ENCODE measurements at regions of chr2 and their contacts with region 1.

Region 1: DNA sequence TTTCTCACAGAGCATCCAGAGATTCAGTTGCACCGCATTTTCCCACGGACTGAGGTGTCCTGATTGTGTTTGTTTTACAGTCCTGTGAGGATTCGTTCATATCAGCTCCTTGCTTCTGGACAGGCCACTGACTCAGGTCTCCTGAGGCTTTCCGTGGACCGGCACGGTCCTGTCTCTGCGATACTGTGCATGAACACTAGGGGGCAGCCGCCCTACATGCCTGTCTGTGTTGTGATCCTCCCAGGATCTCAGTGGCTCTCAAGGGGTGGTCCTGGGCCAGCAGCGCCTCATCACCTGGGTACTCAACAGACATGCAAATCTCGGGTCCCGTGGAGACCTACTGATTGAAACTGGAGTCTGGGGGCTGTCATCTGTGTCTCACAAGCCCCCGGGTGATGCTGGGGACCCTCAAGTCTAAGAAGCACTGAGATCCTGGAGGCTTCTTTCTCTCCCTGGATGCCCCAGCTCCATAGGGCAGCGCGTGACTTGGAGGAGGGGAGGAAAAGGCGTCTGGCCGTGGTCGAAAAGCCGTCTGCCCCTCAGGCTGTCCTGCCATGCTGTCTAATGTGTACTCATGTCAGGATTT is 28.9 kb downstream of the IL1R2 start:
- DNase-seq: peak; percentile 77 to 87
- ATAC-seq: peak; percentile 82 to 97
- H3K4me3 ChIP-seq: no peak overlapping the region
- H3K27ac ChIP-seq: no peak overlapping the region
- H3K4me1 ChIP-seq: peaks cover 3 to 19% of the 10 kb centered on the region in 2 donors
- H3K27me3 ChIP-seq: no peaks in the 10 kb centered on the region
- CTCF ChIP-seq: peak; percentile 97 to 100 (median 98)
- POLR2A ChIP-seq: no peak

Region 2: DNA sequence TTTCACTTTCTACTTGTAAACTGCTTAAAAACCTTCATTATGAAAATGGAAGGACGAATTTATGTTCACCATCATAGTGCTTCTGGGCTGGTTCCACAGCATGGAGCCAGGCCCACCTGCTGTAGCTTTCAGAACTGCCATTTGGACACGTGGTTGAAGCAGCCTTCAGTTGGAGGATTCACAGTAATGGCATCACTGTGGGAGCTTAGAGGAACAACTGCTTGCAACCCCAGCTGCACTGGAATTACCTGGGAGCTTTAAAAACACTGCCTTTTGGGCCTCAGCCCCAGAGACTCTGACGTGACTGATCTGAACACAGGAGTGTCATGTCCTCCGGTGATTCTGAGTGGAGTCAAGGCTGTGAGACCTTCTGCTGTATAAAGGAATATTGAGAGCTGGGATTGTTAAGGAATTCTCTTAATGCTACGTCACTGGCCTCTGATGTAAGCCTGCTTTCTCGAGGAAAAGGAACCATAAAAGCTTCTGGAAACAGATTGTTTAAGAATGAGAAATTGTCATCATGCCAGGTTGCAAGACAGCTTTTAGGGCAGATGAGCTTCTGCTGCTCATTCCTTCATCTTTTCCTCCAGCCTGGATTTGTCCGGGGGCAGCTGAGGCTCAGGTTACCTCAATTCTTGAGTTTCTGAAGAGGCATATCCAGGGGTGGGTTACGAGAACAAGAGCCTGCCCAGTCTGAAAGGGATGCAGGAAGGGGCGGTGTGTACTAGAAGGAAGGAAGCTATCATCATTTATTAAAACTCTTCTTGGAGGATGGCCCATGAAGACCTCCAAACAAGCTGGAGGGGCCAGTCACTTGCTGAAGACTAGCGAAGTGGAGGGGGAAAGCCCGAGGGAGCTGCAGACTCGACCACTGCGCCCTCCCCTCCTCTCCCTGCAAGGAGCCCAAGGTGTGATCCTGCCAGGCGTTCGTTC is 120.6 kb after region 1 on chr2:
- in situ Hi-C with region 1: no loop called
- intact Hi-C with region 1: no loop called
- DNase-seq: no peak
- ATAC-seq: no peak
- H3K4me3 ChIP-seq: peak overlapping the region; percentile 66 to 85 (median 72)
- H3K27ac ChIP-seq: peak overlapping the region; percentile 84 to 97 (median 90)
- H3K4me1 ChIP-seq: peaks cover 10 to 13% of the 10 kb centered on the region in 2 donors
- H3K27me3 ChIP-seq: no peaks in the 10 kb centered on the region
- CTCF ChIP-seq: no peak
- POLR2A ChIP-seq: no peak

Region 3: GRCh38 chr2:102155642-102156491 is 135.2 kb after region 1 on chr2:
- in situ Hi-C with region 1: loop called in 2 of 4 experiments (anchors 5 to 10 kb)
- intact Hi-C with region 1: no loop called
- DNase-seq: peak; percentile 61
- ATAC-seq: peak; percentile 77 to 80
- H3K4me3 ChIP-seq: no peak overlapping the region
- H3K27ac ChIP-seq: peak overlapping the region; percentile 54 to 68 (median 66)
- H3K4me1 ChIP-seq: peaks cover 7 to 13% of the 10 kb centered on the region in 2 donors
- H3K27me3 ChIP-seq: no peaks in the 10 kb centered on the region
- CTCF ChIP-seq: no peak
- POLR2A ChIP-seq: no peak

Region 4: GRCh38 chr2:102187496-102188150 is 166.9 kb after region 1 on chr2:
- in situ Hi-C with region 1: no loop called
- intact Hi-C with region 1: loop called (anchors 1 kb)
- DNase-seq: peak; percentile 31 to 41
- ATAC-seq: peak; percentile 72 to 75
- H3K4me3 ChIP-seq: peak overlapping the region; percentile 56 to 66 (median 61)
- H3K27ac ChIP-seq: peak overlapping the region; percentile 50 to 74 (median 60)
- H3K4me1 ChIP-seq: no peaks in the 10 kb centered on the region
- H3K27me3 ChIP-seq: no peaks in the 10 kb centered on the region
- CTCF ChIP-seq: peak in 4 of 5 experiments; percentile 27 to 54 (median 50)
- POLR2A ChIP-seq: peak in 1 of 2 donors; percentile 28

Region 5: DNA sequence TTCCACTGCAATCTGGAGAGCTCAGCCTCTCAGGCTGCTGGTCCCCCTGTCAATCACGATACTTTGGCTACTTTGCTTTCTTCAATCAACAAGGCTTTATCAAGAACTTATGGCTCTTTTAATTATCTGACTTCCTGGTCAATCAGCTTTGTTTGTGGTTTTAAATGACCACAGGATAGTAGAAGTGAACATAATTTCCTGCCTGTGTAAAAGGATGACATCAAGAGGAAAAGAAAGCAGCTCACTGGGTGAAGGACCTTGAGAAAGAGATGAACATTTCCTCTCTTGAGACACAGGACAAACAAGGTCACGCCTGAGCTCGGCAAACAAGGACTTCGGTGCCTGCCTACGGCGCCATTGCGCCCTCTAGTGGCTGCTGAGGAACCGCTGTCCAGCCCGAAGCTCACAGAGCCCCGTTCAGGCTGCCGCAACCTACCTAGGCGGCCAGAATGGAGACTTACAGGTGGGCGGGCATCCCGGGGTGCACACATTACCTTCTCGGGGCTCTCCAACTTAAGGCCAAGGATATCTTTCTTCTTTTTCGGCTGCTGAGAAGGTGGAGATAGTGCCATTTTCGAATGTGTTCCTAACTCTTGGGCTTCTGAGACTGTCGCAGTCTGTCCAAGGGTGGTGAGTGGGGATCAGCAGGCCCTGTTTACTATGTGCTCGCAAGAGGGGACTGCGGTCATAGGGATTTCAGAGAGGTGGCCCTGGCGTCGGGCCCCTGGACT is 220.1 kb after region 1 on chr2:
- in situ Hi-C with region 1: loop called (anchors 5 kb)
- intact Hi-C with region 1: loop called (anchors 1 kb)
- DNase-seq: peak; percentile 86 to 87
- ATAC-seq: peak; percentile 96 to 98
- H3K4me3 ChIP-seq: peak overlapping the region in 1 of 4 donors; percentile 28
- H3K27ac ChIP-seq: peak overlapping the region; percentile 61 to 79 (median 70)
- H3K4me1 ChIP-seq: peaks cover 0 to 13% of the 10 kb centered on the region in 2 donors
- H3K27me3 ChIP-seq: no peaks in the 10 kb centered on the region
- CTCF ChIP-seq: peak; percentile 95 to 99 (median 97)
- POLR2A ChIP-seq: peak in 1 of 2 donors; percentile 25

Region 6: GRCh38 chr2:102442967-102443828 is 422.5 kb after region 1 on chr2:
- in situ Hi-C with region 1: loop called in 1 of 4 experiments (anchors 25 kb)
- intact Hi-C with region 1: no loop called
- DNase-seq: no peak
- ATAC-seq: no peak
- H3K4me3 ChIP-seq: no peak overlapping the region
- H3K27ac ChIP-seq: no peak overlapping the region
- H3K4me1 ChIP-seq: no peaks in the 10 kb centered on the region
- H3K27me3 ChIP-seq: no peaks in the 10 kb centered on the region
- CTCF ChIP-seq: peak in 4 of 5 experiments; percentile 7 to 60 (median 39)
- POLR2A ChIP-seq: no peak

Measured in gastrocnemius medialis (tissue), 4 donors.